Activated CD4-positive, alpha-beta memory T cell treated with anti-CD3 and anti-CD28 coated beads for 36 hours (primary cell): ENCODE measurements at regions of chr5 and their contacts with region 1.

Region 1: DNA sequence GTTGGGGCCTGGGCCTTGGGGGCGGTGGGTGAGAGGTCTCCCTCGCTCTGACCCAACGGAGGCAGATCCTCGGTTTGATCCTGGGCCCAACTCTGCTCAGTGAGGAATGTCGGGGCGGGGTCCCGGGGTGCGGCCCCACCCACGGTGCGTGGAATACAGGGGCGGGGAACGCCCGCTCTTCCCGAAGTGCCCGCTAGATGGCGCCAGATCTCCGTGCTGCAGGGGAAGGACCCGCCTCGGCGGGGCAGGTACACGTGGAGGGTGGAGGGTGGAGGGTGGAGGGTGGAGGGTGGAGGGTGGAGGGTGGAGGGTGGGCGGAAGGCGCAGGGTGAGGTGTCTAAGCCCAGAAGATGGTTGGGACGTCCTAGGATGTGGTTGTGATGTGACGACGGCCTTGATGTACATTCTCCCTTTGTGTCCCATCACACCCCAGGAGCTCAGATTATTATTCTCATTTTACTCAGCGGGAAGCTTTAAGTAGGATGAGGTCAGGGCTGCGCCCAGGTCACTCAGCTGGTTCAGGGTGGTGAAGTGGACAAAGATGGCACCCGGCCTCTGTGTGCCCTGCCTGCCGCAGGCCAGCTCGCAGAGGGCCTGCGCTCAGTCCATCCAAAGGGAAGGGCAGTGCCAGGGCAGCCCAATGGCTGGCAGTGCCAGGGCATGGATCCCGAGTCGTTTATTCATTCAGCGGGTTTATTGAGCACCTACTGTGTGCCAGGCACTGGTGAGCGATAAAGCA is 9.4 kb upstream of the RPS14 start:
- DNase-seq: peak; percentile 91
- H3K4me3 Mint-ChIP-seq: peak overlapping the region; percentile 53
- H3K27ac Mint-ChIP-seq: no peak overlapping the region
- H3K4me1 Mint-ChIP-seq: peaks cover 11% of the 10 kb centered on the region
- H3K27me3 Mint-ChIP-seq: no peaks in the 10 kb centered on the region

Region 2: DNA sequence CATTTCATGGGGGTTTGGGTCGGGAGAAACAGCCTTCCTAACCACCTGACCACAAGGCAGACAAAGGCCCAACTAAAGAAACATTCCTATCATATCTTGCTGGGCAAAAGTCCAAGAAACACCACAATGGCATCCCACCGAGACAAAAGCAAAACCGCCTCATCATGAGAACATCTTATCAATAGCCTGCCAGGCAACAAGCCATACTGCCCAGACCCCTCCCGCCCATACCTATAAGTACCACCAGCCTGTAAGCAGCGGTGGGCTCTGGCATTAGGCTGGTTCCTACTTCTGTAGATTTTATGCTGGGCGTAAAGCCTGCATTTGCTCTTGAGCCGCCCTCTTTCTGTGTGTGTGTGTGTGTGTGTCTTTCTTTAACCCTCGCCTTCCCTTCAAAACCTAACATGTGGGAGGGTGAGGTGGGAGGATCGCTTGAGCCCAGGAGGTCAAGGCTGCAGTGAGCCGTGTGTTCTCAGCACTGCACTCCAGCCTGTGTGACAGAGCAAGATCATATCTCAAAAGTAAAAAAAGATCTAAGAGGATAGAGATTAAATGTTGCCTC is 571.3 kb before region 1 on chr5:
- CTCF ChIA-PET with region 1: no interaction called
- POLR2A ChIA-PET with region 1: no interaction called
- intact Hi-C with region 1: no loop called
- DNase-seq: no peak
- H3K4me3 Mint-ChIP-seq: no peak overlapping the region
- H3K27ac Mint-ChIP-seq: no peak overlapping the region
- H3K4me1 Mint-ChIP-seq: no peaks in the 10 kb centered on the region
- H3K27me3 Mint-ChIP-seq: peaks cover 2% of the 10 kb centered on the region

Region 3: DNA sequence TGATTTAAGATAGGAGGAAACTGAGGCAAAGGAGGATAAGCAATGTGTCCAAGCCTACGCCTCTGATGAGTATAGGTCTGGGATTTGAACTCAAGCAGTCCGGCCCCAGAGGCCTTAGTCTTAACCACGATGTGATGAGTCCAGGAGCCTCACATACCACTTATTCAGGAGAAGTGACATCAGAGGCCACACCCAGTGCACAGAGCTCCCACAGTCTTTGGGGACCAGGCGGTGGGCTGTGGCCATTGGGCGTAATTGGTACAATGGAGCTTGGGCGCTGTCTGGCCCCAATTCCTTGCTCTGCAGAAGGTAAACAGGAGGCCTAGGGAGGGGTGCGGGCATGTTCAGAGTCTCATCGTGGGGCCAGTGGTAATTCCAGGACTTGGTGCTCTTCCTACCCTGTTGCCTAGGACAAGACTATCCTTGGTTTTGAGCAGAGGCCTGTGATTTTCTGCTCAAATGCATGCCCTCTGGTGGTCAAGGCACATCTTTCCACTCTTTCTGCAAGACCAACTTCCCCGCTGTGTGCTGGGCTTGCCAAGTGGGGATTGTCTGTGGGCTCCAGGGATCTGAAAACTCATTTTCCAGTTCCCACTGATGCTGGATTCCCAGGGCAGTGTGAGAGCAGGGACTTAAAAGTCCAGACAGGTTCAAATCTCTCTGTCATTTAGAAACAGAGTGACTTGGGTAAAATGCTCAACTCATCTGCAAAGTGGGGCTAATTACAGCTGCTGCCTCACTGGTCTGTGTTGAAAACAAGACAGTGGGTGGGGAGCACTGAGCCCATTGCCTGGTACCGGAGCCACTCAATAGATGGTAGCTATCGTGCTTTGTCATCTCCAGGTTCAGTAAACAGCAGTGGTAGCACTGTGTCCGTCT is 64.7 kb after region 1 on chr5:
- CTCF ChIA-PET with region 1: interaction called, 9 read pairs
- POLR2A ChIA-PET with region 1: no interaction called
- intact Hi-C with region 1: loop called (anchors 2 kb)
- DNase-seq: peak; percentile 15
- H3K4me3 Mint-ChIP-seq: no peak overlapping the region
- H3K27ac Mint-ChIP-seq: no peak overlapping the region
- H3K4me1 Mint-ChIP-seq: no peaks in the 10 kb centered on the region
- H3K27me3 Mint-ChIP-seq: no peaks in the 10 kb centered on the region

Region 4: GRCh38 chr5:150544611-150545219 is 85.7 kb after region 1 on chr5:
- CTCF ChIA-PET with region 1: interaction called, 16 read pairs
- POLR2A ChIA-PET with region 1: no interaction called
- intact Hi-C with region 1: loop called (anchors 1 kb)
- DNase-seq: peak; percentile 79
- H3K4me3 Mint-ChIP-seq: no peak overlapping the region
- H3K27ac Mint-ChIP-seq: no peak overlapping the region
- H3K4me1 Mint-ChIP-seq: no peaks in the 10 kb centered on the region
- H3K27me3 Mint-ChIP-seq: no peaks in the 10 kb centered on the region

Region 5: GRCh38 chr5:150560401-150561193 is 101.6 kb after region 1 on chr5:
- CTCF ChIA-PET with region 1: interaction called, 25 read pairs
- POLR2A ChIA-PET with region 1: no interaction called
- intact Hi-C with region 1: loop called (anchors 2 kb)
- DNase-seq: peak; percentile 85
- H3K4me3 Mint-ChIP-seq: no peak overlapping the region
- H3K27ac Mint-ChIP-seq: no peak overlapping the region
- H3K4me1 Mint-ChIP-seq: no peaks in the 10 kb centered on the region
- H3K27me3 Mint-ChIP-seq: no peaks in the 10 kb centered on the region

Region 6: GRCh38 chr5:150656191-150657132 is 197.5 kb after region 1 on chr5:
- CTCF ChIA-PET with region 1: interaction called, 3 read pairs
- POLR2A ChIA-PET with region 1: no interaction called
- intact Hi-C with region 1: loop called (anchors 2 kb)
- DNase-seq: peak; percentile 80
- H3K4me3 Mint-ChIP-seq: peak overlapping the region; percentile 70
- H3K27ac Mint-ChIP-seq: no peak overlapping the region
- H3K4me1 Mint-ChIP-seq: peaks cover 2% of the 10 kb centered on the region
- H3K27me3 Mint-ChIP-seq: no peaks in the 10 kb centered on the region